ENCODE measurements at regions of chr5 and their contacts with region 1.

Region 1: GRCh38 chr5:41924872-41925554 is at the start of gene FBXO4:
- DNase-seq: peak; percentile 71 to 92
- H3K4me3 ChIP-seq: peak within 1 kb of the TSS; percentile 86
- H3K27ac ChIP-seq: peak within 1 kb of the TSS; percentile 18
- H3K4me1 ChIP-seq: peaks cover 23% of the 10 kb centered on the region
- H3K27me3 ChIP-seq: no peaks in the 10 kb centered on the region
- CTCF ChIP-seq: no peak; the same call in 1 of the 2 replicates
- total RNA-seq, gene FBXO4: 27.8 and 30.4 TPM in 2 replicates

Region 2: GRCh38 chr5:41794473-41794872 is 130.5 kb before region 1 on chr5:
- CTCF ChIA-PET with region 1: no interaction called
- POLR2A ChIA-PET with region 1: interaction called, 5 read pairs
- intact Hi-C with region 1: loop called (anchors 5 kb)
- DNase-seq: peak; percentile 36 to 66
- H3K4me3 ChIP-seq: no peak overlapping the region
- H3K27ac ChIP-seq: peak overlapping the region; percentile 36
- H3K4me1 ChIP-seq: peaks cover 12% of the 10 kb centered on the region
- H3K27me3 ChIP-seq: no peaks in the 10 kb centered on the region
- CTCF ChIP-seq: no peak

Region 3: GRCh38 chr5:41869739-41870626 is 55.0 kb before region 1 on chr5 and contains the start of gene OXCT1:
- CTCF ChIA-PET with region 1: no interaction called
- POLR2A ChIA-PET with region 1: no interaction called
- intact Hi-C with region 1: loop called (anchors 2 kb)
- DNase-seq: peak; percentile 66 to 78
- H3K4me3 ChIP-seq: peak within 1 kb of the TSS; percentile 67
- H3K27ac ChIP-seq: no peak within 1 kb of the TSS
- H3K4me1 ChIP-seq: 0 out of 2 replicates have a peak, but pooled peaks cover 4% of the 10 kb centered on the region
- H3K27me3 ChIP-seq: peaks cover 24% of the 10 kb centered on the region
- CTCF ChIP-seq: no peak
- total RNA-seq, gene OXCT1: 22.5 and 29.7 TPM in 2 replicates

Region 4: DNA sequence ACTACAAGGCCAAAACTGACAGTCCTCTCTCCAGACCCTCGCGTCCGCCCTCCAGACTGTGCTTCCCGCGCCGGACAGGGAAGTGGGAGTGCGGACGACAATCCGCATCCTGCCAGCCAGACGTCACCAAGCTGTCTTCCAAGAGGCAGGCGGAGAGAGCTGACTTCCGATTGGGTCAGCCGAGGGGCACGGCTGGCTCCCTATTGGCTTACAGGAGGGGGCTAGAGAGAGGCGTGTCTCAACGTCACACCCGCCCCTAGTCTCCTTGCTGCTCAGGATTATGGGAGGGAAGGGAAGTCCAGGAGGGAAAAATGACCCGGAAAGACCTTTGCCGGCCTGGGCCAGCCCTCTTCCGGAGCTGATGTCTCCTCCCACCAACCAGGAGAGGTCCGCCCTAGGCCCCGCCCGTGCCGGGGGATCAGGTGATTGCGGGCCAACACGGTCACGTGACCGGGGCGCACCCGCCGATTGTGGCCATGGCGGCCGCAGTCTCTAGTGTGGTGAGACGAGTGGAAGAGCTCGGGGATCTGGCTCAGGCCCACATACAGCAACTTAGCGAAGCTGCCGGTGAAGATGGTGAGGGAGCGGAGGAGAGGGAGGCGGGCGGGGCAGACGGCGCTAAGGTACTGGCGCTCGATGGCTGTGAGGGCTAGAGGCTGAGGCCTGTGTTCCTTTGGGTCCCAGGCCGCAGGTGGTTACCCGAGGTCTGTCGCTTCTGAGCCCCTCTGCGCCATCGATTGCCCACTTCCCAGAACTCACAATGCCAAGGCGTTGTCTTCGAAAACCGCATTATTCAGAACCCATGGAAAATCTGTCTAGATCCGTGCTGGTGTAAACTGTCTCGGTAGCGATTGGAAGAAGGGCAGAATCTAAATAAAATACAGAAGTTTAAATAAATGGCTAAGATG is 20.9 kb before region 1 on chr5 and contains the start of gene RIMOC1:
- CTCF ChIA-PET with region 1: interaction called, 5 read pairs
- POLR2A ChIA-PET with region 1: interaction called, 3 read pairs
- intact Hi-C with region 1: loop called (anchors 1 kb)
- DNase-seq: peak; percentile 99 to 100
- H3K4me3 ChIP-seq: peak within 1 kb of the TSS; percentile 83
- H3K27ac ChIP-seq: peak within 1 kb of the TSS; percentile 68
- H3K4me1 ChIP-seq: peaks cover 16% of the 10 kb centered on the region
- H3K27me3 ChIP-seq: no peaks in the 10 kb centered on the region
- CTCF ChIP-seq: no peak
- total RNA-seq, gene RIMOC1: 40.1 and 68.6 TPM in 2 replicates

Region 5: DNA sequence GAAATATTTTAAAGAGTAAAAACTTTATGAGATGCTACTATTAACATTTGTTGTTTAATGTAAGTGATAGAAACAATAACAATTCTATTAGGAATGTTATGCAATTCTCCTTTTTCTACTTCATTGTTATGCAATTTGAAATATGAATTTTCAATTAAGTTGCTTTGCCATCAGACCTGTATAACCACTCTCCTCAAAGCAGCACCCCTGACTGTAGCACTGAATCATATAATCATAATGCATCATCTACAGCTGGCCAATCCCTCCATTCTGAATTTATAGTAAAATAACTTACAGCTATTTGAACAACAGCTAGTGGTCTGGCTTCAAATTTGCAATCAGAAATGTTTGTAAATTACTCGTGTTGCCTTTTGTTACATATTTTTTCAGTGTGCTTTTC is 29.3 kb after region 1 on chr5:
- CTCF ChIA-PET with region 1: no interaction called
- POLR2A ChIA-PET with region 1: no interaction called
- intact Hi-C with region 1: no loop called
- DNase-seq: no peak
- H3K4me3 ChIP-seq: no peak overlapping the region
- H3K27ac ChIP-seq: no peak overlapping the region
- H3K4me1 ChIP-seq: no peaks in the 10 kb centered on the region
- H3K27me3 ChIP-seq: no peaks in the 10 kb centered on the region
- CTCF ChIP-seq: no peak

Region 6: DNA sequence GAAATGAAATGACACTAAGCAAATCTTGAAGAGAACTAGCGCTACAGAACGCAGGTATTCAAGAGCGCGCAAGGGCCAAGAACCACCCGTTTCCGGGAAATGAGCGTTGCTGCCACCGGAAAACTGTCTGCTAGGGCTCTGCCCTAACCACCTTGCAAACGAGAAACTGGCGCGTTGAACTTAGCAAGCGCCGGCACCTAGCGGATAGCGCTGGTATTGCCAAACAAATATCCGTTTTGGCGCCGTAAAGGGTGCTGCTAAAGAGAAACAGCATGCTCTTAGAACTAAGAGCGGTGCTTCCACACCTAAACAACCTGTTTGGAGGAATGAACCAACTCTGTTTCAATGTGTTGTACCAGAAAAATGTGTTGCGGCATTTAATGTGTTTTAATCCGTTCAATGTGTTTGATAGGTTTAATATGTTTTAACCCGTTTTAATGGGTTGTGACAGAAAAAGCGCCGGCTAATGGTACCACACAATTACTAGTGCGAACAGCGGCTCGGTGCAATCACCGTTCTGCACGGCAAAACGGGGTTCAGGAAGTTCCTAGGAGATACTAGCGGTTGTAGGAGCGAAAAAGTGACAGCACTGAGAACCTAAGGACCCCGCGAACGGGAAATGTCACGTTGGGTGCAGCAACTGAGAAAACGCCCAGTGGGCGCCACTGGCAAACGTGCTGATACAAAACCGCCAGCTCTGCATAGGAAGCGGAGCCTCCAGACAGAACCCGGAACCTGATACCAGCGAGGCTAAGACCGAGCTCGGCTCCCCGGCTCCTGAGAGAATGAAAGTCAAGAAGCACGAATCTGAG is 1115.5 kb after region 1 on chr5 and contains the start of gene ANXA2R:
- CTCF ChIA-PET with region 1: no interaction called
- POLR2A ChIA-PET with region 1: no interaction called
- intact Hi-C with region 1: loop called (anchors 10 kb)
- DNase-seq: peak; percentile 94 to 97
- H3K4me3 ChIP-seq: peak within 1 kb of the TSS; percentile 76
- H3K27ac ChIP-seq: peak within 1 kb of the TSS; percentile 60
- H3K4me1 ChIP-seq: peaks cover 1% of the 10 kb centered on the region; the same call in 1 of the 2 replicates
- H3K27me3 ChIP-seq: no peaks in the 10 kb centered on the region
- CTCF ChIP-seq: peak; percentile 99
- total RNA-seq, gene ANXA2R: 3.6 and 6.3 TPM in 2 replicates

Measured in PC-9 (cell line).